ENCODE measurements at regions of chr17 and their contacts with region 1.

Region 1: GRCh38 chr17:79087428-79088143 is 13.0 kb downstream of the ENGASE start:
- DNase-seq: peak; percentile 76
- H3K4me3 ChIP-seq: no peak overlapping the region
- H3K27ac ChIP-seq: no peak overlapping the region
- H3K4me1 ChIP-seq: peaks cover 0 to 13% (median 3%) of the 10 kb centered on the region in 4 donors
- H3K27me3 ChIP-seq: peaks cover 26% of the 10 kb centered on the region
- CTCF ChIP-seq: peak; percentile 89 to 96 (median 93)
- EP300 ChIP-seq: no peak
- POLR2A ChIP-seq: no peak

Region 2: DNA sequence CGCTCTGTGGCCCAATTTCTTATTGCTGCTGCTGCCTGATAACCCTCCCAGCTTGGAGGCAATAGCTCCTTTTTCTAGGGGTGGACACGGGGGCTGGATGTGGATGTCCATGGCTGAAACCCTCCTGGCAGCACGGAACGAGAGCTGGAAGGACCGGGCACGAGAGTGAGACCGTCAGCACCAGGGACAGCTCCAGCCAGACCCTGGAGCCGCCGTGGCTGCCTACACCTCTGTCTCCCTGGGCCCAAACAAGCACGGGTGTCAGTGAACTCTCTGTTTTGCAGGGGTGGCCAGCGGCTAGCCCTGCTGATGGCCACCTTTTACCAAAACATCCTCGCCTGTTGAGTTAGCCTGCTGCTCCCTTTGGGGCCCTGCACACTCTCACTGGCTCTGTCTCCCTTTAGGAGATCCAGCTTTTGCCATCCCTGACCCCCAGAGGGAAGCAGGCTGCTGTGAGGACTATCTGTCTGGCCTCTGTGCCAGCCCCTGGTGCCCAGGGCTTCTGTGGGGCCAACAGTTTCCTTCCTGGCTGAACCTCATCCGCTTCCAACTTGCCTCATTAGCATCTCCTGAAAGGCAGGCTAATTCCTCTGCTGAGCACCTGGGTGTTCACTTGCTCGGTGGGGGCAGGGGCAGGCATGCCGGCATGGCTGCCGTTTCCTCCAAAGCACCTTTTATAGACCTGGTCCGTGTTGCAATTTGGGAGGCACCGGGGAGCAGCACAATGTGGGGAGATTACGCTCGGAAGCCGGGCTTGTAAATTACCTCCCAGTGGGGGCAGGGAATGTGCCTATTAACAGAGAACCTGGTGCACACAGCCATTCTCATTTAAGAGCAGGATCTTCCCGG is 105.1 kb after region 1 on chr17:
- in situ Hi-C with region 1: no loop called
- intact Hi-C with region 1: no loop called
- DNase-seq: no peak
- H3K4me3 ChIP-seq: no peak overlapping the region
- H3K27ac ChIP-seq: no peak overlapping the region
- H3K4me1 ChIP-seq: no peaks in the 10 kb centered on the region
- H3K27me3 ChIP-seq: peaks cover 34% of the 10 kb centered on the region
- CTCF ChIP-seq: no peak
- EP300 ChIP-seq: no peak
- POLR2A ChIP-seq: no peak

Region 3: DNA sequence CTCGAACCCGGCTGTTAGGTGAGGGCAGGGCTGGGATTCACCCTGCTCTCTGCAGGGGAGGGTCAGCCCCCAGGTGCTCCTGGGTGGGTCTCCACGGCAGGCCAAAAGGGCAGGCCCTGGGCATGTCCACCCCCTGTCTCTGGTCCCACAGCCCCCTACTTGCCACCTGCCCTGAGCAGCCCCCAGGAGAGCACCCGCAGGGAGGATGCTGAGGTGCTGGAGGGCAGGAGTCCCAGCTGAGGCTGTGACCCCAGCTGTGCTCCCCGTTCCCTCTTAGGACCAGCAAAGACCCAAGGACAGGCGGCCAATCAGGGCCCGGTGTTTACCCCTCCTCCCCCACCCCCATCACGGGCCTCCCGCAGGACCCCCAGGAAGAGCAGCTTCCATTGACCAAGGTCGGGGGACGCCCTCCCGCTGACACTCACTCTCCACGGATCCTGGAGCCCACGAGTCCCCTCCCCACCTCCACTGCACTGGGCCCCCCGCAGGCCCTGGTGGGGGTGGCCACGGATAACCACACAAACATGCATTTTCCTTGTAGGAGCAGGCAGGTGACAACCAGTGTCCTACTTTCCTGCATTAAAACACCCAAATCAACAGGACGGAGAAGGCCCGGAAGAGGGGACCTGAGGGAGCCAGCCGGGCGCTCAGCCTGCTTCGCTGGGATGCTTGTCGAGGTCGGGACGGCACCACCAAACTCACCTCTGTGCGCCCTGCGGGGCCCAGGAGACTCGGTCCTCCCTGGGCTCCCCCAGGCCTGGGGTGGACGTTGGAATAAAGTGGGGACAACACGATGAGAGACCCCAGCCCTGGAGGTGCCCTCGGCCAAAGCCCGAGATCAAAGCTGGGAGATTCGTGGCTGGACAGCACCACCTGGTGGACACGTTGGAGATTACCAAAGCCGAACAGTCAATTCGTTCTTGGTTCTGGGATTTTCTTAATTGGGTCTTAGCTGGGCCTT is 620.6 kb after region 1 on chr17:
- in situ Hi-C with region 1: no loop called
- intact Hi-C with region 1: loop called (anchors 2 kb)
- DNase-seq: peak; percentile 54
- H3K4me3 ChIP-seq: peak overlapping the region in 1 of 4 donors; percentile 15
- H3K27ac ChIP-seq: no peak overlapping the region
- H3K4me1 ChIP-seq: peaks cover 0 to 10% (median 2%) of the 10 kb centered on the region in 4 donors
- H3K27me3 ChIP-seq: no peaks in the 10 kb centered on the region
- CTCF ChIP-seq: peak; percentile 74 to 85 (median 78)
- EP300 ChIP-seq: no peak
- POLR2A ChIP-seq: no peak